H1 (cell line): ENCODE measurements at regions of chr22 and their contacts with region 1.

Region 1: DNA sequence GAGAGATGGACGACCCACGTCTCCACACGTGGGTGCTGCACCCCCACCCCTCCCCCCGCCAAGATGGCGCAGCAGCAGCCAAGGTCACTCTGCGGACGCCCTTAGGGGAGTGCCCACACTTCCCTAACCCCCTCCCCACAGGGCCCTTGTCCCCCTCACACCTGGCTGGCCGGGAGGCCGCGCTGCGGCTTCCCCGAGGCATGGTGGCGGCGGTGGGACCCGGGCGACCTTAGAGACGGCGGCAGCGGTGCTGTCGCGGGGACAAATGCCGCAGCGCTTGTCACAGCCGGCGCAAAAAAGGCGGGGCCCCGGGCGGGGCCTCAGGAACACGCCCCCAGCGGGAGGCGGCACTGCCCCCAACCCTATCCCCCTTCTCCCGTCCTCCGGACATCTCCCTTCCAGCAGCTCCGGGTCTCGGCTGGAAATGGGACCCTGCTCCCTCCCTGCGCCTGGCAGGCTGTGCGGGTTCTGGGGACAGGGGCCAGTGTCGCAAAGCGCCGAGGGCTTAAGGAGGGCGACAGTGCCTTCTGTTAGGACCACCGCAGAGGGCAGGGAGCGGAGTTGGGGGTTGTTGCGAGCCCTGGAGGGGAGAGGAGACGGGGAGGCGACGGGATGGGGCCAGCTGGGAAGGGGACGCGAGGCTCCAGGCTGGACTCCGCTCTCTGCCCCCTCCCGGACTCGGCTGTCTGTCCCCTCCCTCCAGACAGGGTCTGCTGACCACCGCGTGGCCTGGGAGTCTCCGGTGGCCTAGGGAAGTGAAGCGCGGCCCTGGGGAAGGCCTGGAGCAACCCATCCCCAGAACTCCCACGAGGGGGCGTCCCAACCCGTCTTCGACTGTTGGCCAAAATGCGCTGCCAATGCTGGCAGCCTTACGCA is at the start of gene CHCHD10:
- DNase-seq: peak in 1 of 2 experiments; percentile 96
- H3K4me3 ChIP-seq: peak within 1 kb of the TSS; percentile 63 to 96 (median 74)
- H3K27ac ChIP-seq: no peak within 1 kb of the TSS; the same call in 1 of the 2 replicates
- H3K4me1 ChIP-seq: peaks cover 0 to 27% (median 20%) of the 10 kb centered on the region in 4 experiments; a peak in 6 of 7 replicates
- H3K27me3 ChIP-seq: peaks cover 0 to 14% (median 9%) of the 10 kb centered on the region in 4 experiments; a peak in 6 of 7 replicates
- CTCF ChIP-seq: peak; percentile 78 to 86 (median 85)
- EP300 ChIP-seq: no peak
- POLR2A ChIP-seq: 0 out of 3 replicates have a peak, but pooled peaks of 1 of the 2 experiments have one; percentile 43
- RAD21 ChIP-seq: peak; percentile 58 to 70
- total RNA-seq, gene CHCHD10: 94.5 and 104 TPM in 2 replicates

Region 2: DNA sequence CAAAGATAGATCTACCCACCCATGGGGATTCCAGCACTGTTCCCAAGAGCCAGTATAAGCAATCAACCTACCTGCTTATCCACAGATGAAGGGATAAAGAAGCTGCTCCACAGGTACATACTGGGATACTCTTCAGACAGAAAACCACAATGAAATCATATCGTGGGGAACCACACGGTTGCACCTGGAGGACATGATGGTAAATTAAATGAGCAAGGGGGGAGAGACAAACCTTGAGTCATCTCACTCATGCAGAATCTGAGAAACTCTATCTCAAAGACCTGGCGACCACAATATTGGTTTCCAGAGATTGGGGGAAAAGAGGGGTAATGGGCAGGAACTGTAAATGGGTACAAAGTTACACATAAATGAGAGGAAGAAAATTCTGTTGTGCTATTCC is 62.6 kb before region 1 on chr22:
- CTCF ChIA-PET with region 1: no interaction called
- POLR2A ChIA-PET with region 1: no interaction called
- DNase-seq: no peak
- H3K4me3 ChIP-seq: no peak overlapping the region
- H3K27ac ChIP-seq: no peak overlapping the region
- H3K4me1 ChIP-seq: no peaks in the 10 kb centered on the region; a peak in 1 of 7 replicates
- H3K27me3 ChIP-seq: no peaks in the 10 kb centered on the region
- CTCF ChIP-seq: no peak
- EP300 ChIP-seq: no peak
- POLR2A ChIP-seq: no peak
- RAD21 ChIP-seq: no peak

Region 3: DNA sequence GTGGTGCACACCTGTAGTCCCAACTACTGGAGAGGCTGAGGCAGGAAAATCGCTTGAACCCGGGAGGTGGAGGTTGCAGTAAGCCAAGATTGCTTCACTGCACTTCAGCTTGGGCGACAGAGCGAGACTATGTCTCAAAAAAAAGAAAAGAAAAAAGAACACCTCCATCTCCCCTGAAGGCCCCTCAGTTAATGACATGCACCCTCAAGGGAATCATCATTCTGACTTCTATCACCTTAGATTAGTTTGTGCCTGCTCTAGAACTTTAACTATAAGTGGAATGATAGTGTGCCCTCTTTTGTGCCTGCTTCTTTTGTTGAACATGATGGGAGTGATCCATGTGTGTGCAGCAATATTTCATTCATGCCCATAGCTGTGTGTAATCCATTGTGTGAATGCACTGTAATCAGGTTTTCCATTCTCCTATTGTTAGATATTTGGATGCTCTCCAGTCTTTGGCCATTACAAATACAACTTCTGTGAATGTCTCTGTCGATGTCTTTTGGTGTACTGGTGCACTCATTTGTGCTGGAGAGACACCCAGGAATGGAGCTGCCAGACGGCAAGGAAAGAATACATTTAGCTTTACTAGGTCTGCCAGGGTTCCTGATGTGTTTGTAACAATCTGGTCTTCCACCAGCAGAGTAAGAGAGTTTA is 12.8 kb before region 1 on chr22:
- CTCF ChIA-PET with region 1: interaction called, 6 read pairs
- POLR2A ChIA-PET with region 1: interaction called, 22 read pairs
- DNase-seq: no peak
- H3K4me3 ChIP-seq: no peak overlapping the region
- H3K27ac ChIP-seq: no peak overlapping the region
- H3K4me1 ChIP-seq: peaks cover 0 to 6% (median under 1%) of the 10 kb centered on the region in 4 experiments; a peak in 4 of 7 replicates
- H3K27me3 ChIP-seq: no peaks in the 10 kb centered on the region
- CTCF ChIP-seq: no peak
- EP300 ChIP-seq: no peak
- POLR2A ChIP-seq: no peak
- RAD21 ChIP-seq: no peak

Region 4: DNA sequence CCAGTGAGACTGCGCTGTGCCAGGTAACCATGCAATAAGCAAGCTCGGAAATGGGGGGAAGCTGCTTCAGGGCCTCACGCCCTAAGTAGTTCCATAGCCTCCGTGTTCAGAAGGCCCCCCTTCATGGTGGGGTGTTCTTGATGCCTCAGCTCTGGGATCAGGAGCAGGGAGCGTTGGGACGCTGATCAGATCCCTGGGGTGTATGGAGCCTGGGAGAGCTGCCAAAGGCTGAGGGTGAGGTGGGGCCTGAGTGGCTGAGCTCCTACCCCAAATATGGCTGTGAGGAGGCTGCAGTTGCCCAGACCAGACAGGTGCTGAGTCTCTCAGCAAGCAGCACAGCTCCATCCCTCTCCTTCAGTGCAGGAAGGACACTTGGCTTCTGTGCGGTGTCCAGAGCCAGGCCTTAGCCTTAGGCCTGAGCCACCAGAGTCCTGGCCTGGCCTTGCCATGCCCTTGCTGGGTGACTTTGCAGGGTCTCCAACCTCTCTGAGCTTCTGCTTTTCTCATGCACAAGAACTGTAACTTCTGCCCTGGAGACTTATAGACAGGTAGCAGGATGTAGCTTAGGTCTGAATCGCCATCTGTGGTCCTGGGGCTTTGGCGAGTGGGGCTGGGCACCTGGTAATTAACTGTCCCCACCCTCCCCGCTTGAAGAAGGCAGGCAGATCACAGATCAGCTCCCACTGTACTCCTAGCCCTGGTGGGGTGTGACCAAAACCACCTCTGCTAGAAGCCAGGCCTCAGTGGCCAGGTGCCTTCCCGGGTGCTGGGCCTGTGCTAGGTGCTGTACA is 10.1 kb after region 1 on chr22:
- CTCF ChIA-PET with region 1: interaction called, 9 read pairs
- POLR2A ChIA-PET with region 1: interaction called, 21 read pairs
- DNase-seq: no peak
- H3K4me3 ChIP-seq: no peak overlapping the region
- H3K27ac ChIP-seq: no peak overlapping the region
- H3K4me1 ChIP-seq: peaks cover 0 to 11% (median 4%) of the 10 kb centered on the region in 4 experiments; a peak in 3 of 7 replicates
- H3K27me3 ChIP-seq: peaks cover 0 to 19% (median 12%) of the 10 kb centered on the region in 4 experiments; a peak in 5 of 7 replicates
- CTCF ChIP-seq: no peak
- EP300 ChIP-seq: no peak
- POLR2A ChIP-seq: no peak
- RAD21 ChIP-seq: no peak

Region 5: GRCh38 chr22:23786752-23787599 is 19.1 kb after region 1 on chr22 and contains the start of gene SMARCB1:
- CTCF ChIA-PET with region 1: interaction called, 47 read pairs
- POLR2A ChIA-PET with region 1: interaction called, 45 read pairs
- DNase-seq: peak in 1 of 2 experiments; percentile 95
- H3K4me3 ChIP-seq: peak within 1 kb of the TSS; percentile 79 to 87 (median 82)
- H3K27ac ChIP-seq: peak within 1 kb of the TSS; percentile 98
- H3K4me1 ChIP-seq: peaks cover 0 to 10% (median 4%) of the 10 kb centered on the region in 4 experiments; a peak in 6 of 7 replicates
- H3K27me3 ChIP-seq: no peaks in the 10 kb centered on the region
- CTCF ChIP-seq: no peak
- EP300 ChIP-seq: no peak
- POLR2A ChIP-seq: peak in 1 of 2 experiments; percentile 96; a peak in 2 of 3 replicates
- RAD21 ChIP-seq: peak in 1 of 2 experiments; percentile 11; a peak in 1 of 4 replicates
- total RNA-seq, gene SMARCB1: 116 and 124 TPM in 2 replicates